ENCODE measurements at regions of chr7 and their contacts with region 1.

Region 1: DNA sequence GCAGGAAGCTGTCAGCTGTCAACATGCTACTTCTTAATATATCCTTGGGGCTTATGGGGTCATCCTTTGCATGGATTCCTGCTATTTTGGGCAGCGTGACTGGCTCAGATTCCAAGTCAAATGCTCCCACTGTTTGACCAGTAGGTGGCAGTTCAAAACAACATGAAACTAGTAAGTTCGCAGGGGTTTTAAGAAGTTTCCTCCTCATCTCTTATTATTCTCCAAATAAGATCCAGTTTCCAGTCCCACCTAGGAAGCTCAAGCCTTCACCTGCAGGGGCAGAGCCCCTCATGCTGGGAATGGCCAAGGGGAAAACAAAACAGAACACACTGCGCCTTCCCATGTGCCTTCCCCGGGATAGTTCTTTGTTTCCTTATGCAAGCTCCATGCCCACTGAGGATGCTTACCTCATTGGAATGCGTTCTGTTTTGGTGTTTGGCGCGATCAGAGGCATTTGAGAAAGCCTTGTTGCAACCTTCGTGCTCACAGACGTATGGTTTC is 259.8 kb downstream of the GLI3 start:
- DNase-seq: no peak
- H3K4me3 ChIP-seq: no peak overlapping the region
- H3K27ac ChIP-seq: no peak overlapping the region
- H3K4me1 ChIP-seq: peaks cover 6% of the 10 kb centered on the region
- H3K27me3 ChIP-seq: no peaks in the 10 kb centered on the region
- CTCF ChIP-seq: peak; percentile 43 to 56 (median 51)
- EP300 ChIP-seq: no peak
- POLR2A ChIP-seq: no peak

Region 2: GRCh38 chr7:41940760-41941343 is 36.3 kb before region 1 on chr7:
- intact Hi-C with region 1: loop called in 1 of 4 experiments (anchors 5 kb)
- DNase-seq: peak; percentile 65 to 77 (median 73)
- H3K4me3 ChIP-seq: no peak overlapping the region
- H3K27ac ChIP-seq: no peak overlapping the region
- H3K4me1 ChIP-seq: no peaks in the 10 kb centered on the region
- H3K27me3 ChIP-seq: no peaks in the 10 kb centered on the region
- CTCF ChIP-seq: peak; percentile 74 to 89 (median 76)
- EP300 ChIP-seq: no peak
- POLR2A ChIP-seq: no peak

Region 3: GRCh38 chr7:42247301-42247700 is 270.1 kb after region 1 on chr7:
- intact Hi-C with region 1: loop called in 1 of 4 experiments (anchors 5 kb)
- DNase-seq: no peak
- H3K4me3 ChIP-seq: no peak overlapping the region
- H3K27ac ChIP-seq: no peak overlapping the region
- H3K4me1 ChIP-seq: no peaks in the 10 kb centered on the region
- H3K27me3 ChIP-seq: no peaks in the 10 kb centered on the region
- CTCF ChIP-seq: no peak
- EP300 ChIP-seq: no peak
- POLR2A ChIP-seq: no peak

Region 4: GRCh38 chr7:42690794-42691639 is 713.8 kb after region 1 on chr7:
- intact Hi-C with region 1: loop called in 1 of 4 experiments (anchors 10 kb)
- DNase-seq: peak in 1 of 5 donors; percentile 15
- H3K4me3 ChIP-seq: no peak overlapping the region
- H3K27ac ChIP-seq: no peak overlapping the region
- H3K4me1 ChIP-seq: no peaks in the 10 kb centered on the region
- H3K27me3 ChIP-seq: no peaks in the 10 kb centered on the region
- CTCF ChIP-seq: no peak
- EP300 ChIP-seq: no peak
- POLR2A ChIP-seq: no peak

Region 5: GRCh38 chr7:42831718-42832431 is 854.7 kb after region 1 on chr7:
- intact Hi-C with region 1: loop called in 1 of 4 experiments (anchors 10 kb)
- DNase-seq: peak; percentile 33 to 64 (median 54)
- H3K4me3 ChIP-seq: peak overlapping the region; percentile 12
- H3K27ac ChIP-seq: no peak overlapping the region
- H3K4me1 ChIP-seq: peaks cover 7% of the 10 kb centered on the region
- H3K27me3 ChIP-seq: no peaks in the 10 kb centered on the region
- CTCF ChIP-seq: peak in 2 of 3 donors; percentile 30 to 63
- EP300 ChIP-seq: no peak
- POLR2A ChIP-seq: no peak

Region 6: DNA sequence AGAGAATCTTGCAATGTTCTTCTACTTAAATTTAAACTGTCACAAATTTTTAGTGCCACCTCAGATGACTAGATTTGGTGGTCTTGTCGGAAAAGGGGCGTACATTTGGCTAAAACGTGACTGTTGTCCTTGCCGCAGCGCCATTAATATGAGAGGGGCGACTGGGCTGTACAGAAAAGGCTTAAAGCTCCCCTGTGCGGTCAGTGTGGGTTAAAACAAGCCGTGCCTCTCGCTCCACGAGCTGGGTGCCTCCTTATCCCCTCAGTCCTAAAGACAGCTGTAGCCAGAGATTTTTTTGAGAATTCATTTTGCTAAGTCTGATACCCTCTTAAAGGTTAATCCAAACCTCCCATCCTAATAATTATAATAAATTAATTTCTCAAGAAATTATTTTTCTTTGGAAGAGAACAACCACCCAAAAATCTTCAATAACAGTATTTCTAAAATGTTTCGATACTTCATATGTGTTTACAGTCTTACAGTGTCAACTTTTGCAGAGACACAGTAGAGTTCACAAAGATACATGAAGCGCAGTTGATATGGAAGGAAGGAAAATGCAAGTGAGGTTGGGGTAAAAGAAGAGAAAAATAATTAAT is 866.1 kb after region 1 on chr7:
- intact Hi-C with region 1: loop called in 2 of 4 experiments (anchors 10 kb)
- DNase-seq: peak; percentile 30 to 54 (median 50)
- H3K4me3 ChIP-seq: peak overlapping the region; percentile 22
- H3K27ac ChIP-seq: no peak overlapping the region
- H3K4me1 ChIP-seq: no peaks in the 10 kb centered on the region
- H3K27me3 ChIP-seq: no peaks in the 10 kb centered on the region
- CTCF ChIP-seq: peak; percentile 25 to 44 (median 28)
- EP300 ChIP-seq: no peak
- POLR2A ChIP-seq: no peak

Measured in ovary (tissue), 10 donors.